ENCODE measurements at regions of chr20 and their contacts with region 1.

Region 1: DNA sequence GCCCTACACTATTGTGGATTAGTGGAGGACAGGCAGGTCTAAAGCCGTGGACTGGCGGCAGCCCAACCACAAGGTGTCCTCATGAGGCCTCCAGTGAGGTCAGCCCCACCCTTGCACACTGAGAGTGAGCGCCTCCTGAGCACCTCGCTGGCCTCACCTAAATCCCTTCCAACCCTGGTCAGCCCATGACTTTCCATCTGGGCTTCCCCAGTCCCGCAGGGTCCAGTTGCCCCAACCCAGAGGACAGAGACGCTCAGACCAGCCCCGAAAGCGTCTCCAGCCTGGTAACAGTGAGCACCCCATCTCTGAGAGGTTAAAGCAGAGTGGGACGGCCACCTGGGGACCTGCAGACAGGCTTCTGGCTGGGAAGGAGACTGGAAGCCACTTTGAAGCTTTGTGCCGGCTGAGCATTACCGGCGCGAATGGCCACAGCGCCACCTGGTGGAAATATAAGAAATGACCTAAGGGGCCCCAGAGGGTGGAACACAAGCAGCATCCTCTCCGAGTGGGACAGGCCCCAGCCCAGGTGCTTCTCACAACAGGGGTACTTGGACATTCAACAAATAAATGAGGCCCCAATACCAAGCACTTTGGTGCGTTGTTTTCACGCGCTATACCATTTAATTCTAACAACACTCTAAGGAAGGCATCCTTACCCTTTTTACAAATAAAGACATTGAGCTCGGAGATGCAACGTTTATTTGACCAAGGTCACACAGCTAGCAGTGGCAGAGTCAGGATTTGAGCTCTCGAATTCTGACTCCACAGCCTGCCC is 65.7 kb upstream of the TOP1 start:
- DNase-seq: peak; percentile 56
- H3K4me3 ChIP-seq: no peak overlapping the region
- H3K27ac ChIP-seq: no peak overlapping the region
- H3K4me1 ChIP-seq: peaks cover 26% of the 10 kb centered on the region
- H3K27me3 ChIP-seq: no peaks in the 10 kb centered on the region
- CTCF ChIP-seq: peak; percentile 69 to 89

Region 2: DNA sequence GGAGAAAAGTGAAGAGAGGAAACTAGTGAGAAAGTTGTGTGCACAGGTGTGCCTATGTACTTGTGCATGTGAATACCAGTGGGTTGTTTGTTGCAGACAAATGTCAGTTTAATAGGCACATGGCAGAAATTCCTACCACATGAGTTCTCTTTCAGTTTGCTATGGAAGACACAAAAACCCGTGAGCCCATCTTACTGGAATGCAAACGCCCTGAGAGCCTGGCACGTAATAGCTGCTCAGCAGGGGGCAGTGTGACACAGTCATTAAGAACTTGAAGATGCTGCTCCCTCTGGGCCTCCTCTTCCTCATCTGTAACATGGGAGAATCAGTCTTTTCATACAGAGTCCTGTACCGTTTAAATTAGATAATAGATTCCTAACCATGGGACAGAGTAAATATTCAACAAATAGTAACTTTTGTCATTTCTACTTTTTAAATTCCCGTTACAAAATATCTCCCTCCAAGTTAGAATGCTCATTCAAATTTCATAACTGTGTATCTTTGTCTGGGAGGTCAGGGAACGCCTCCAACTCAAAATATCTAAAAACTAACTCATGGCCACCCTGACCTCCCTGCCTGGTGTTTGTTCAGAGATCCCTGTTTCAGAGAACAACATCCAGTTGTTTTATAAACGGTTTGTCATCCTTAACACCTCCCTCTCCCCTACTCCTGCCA is 1076.8 kb before region 1 on chr20:
- CTCF ChIA-PET with region 1: no interaction called
- dilution Hi-C with region 1: no loop called
- in situ Hi-C with region 1: no loop called
- intact Hi-C with region 1: loop called (anchors 1 kb)
- DNase-seq: peak; percentile 61
- H3K4me3 ChIP-seq: no peak overlapping the region
- H3K27ac ChIP-seq: no peak overlapping the region
- H3K4me1 ChIP-seq: no peaks in the 10 kb centered on the region
- H3K27me3 ChIP-seq: no peaks in the 10 kb centered on the region
- CTCF ChIP-seq: peak; percentile 58 to 59

Region 3: GRCh38 chr20:40265825-40266533 is 696.9 kb before region 1 on chr20:
- CTCF ChIA-PET with region 1: no interaction called
- dilution Hi-C with region 1: no loop called
- in situ Hi-C with region 1: no loop called
- intact Hi-C with region 1: loop called (anchors 1 kb)
- DNase-seq: peak; percentile 36
- H3K4me3 ChIP-seq: no peak overlapping the region
- H3K27ac ChIP-seq: no peak overlapping the region
- H3K4me1 ChIP-seq: no peaks in the 10 kb centered on the region
- H3K27me3 ChIP-seq: no peaks in the 10 kb centered on the region
- CTCF ChIP-seq: peak; percentile 57 to 76

Region 4: GRCh38 chr20:40741507-40742106 is 221.3 kb before region 1 on chr20:
- CTCF ChIA-PET with region 1: interaction called, 6 read pairs
- dilution Hi-C with region 1: no loop called
- in situ Hi-C with region 1: no loop called
- intact Hi-C with region 1: loop called (anchors 1 kb)
- DNase-seq: peak; percentile 37
- H3K4me3 ChIP-seq: no peak overlapping the region
- H3K27ac ChIP-seq: no peak overlapping the region
- H3K4me1 ChIP-seq: no peaks in the 10 kb centered on the region
- H3K27me3 ChIP-seq: peaks cover 1% of the 10 kb centered on the region
- CTCF ChIP-seq: peak; percentile 80 to 92

Region 5: DNA sequence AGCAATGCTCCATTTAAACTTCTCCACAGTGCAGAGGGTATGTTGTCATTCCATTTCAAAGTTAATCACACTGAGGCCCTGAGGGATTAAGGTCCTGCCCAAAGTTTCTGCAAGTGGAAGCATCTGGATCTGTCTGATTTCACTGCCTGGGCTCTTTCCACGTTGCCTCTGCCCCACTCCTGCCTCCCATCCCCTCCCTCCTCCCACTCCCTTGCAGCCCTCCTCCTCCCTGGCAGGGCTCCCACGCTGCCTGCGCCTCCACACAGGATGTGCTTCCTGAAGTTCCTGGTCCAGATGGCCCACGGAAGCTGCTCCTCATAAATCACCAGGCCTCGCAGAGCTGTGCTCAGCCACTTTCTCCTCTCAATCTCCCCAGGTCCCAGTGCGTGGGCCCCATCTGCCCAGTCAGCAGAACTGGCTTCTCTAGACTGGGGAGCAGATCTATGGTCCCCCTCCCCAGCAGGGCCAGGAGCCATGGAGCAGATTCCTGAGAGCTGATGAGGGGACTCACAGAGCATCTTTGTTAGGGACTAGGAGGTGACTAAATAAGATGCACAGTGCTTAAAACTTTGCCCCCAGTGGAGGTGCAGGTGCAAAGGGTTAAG is 208.5 kb before region 1 on chr20:
- CTCF ChIA-PET with region 1: no interaction called
- dilution Hi-C with region 1: no loop called
- in situ Hi-C with region 1: no loop called
- intact Hi-C with region 1: no loop called
- DNase-seq: no peak
- H3K4me3 ChIP-seq: no peak overlapping the region
- H3K27ac ChIP-seq: no peak overlapping the region
- H3K4me1 ChIP-seq: peaks cover 7% of the 10 kb centered on the region
- H3K27me3 ChIP-seq: no peaks in the 10 kb centered on the region
- CTCF ChIP-seq: no peak

Region 6: DNA sequence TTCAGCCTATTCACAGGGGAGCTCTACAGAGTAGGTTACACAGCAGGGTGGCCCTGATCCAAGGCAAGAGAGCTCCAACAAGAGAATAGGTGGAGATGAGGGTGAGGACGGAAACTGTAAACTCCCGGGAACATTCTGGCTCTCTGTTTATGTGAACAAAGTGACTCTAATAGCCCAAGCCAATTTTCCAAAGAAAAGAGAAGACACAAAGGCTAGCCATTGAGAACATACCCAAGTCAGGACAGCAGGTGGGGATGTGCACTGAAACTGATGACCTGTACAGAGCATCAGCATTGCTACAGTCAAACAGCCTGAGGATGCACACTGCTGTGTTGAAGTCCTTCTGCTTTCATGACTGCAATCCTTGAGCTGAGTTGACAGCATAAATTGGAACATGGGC is 70.3 kb before region 1 on chr20:
- CTCF ChIA-PET with region 1: no interaction called
- dilution Hi-C with region 1: no loop called
- in situ Hi-C with region 1: no loop called
- intact Hi-C with region 1: loop called (anchors 1 kb)
- DNase-seq: no peak
- H3K4me3 ChIP-seq: no peak overlapping the region
- H3K27ac ChIP-seq: no peak overlapping the region
- H3K4me1 ChIP-seq: no peaks in the 10 kb centered on the region
- H3K27me3 ChIP-seq: no peaks in the 10 kb centered on the region
- CTCF ChIP-seq: peak in 1 of 2 donors; percentile 5

Region 7: DNA sequence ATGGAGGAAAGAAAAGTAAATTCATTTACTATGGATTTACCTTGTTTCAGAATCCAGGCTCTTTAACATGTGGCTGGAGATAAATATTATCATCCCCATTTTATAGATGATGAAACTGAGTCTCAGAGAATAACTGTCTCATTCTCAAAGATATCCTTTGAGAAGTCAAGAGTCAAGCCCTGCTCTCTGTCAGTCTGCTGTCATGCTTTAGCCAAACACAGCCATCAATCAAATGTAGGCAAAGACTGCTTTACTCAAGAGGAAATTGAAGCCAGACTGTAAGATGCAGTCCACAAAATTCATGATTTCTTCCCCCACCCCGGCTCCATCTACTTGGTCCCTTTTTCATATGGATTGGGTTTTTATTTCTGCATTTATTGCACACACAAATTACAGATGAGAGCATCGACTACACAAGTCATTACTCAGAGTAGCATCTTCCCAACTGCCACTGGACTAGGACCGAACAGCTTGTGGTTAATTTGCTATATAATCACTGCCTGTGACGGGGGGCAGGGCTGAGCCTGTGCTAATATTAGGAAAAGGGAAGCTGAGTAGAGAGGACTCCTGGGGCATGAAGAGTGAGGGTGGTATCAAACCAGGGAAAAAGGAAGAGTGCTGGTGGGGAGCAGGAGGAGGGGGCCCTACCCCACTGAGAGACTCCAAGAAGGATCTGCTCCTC is 36.9 kb before region 1 on chr20:
- CTCF ChIA-PET with region 1: no interaction called
- dilution Hi-C with region 1: no loop called
- in situ Hi-C with region 1: no loop called
- intact Hi-C with region 1: no loop called
- DNase-seq: no peak
- H3K4me3 ChIP-seq: no peak overlapping the region
- H3K27ac ChIP-seq: no peak overlapping the region
- H3K4me1 ChIP-seq: no peaks in the 10 kb centered on the region
- H3K27me3 ChIP-seq: no peaks in the 10 kb centered on the region
- CTCF ChIP-seq: no peak

Region 8: DNA sequence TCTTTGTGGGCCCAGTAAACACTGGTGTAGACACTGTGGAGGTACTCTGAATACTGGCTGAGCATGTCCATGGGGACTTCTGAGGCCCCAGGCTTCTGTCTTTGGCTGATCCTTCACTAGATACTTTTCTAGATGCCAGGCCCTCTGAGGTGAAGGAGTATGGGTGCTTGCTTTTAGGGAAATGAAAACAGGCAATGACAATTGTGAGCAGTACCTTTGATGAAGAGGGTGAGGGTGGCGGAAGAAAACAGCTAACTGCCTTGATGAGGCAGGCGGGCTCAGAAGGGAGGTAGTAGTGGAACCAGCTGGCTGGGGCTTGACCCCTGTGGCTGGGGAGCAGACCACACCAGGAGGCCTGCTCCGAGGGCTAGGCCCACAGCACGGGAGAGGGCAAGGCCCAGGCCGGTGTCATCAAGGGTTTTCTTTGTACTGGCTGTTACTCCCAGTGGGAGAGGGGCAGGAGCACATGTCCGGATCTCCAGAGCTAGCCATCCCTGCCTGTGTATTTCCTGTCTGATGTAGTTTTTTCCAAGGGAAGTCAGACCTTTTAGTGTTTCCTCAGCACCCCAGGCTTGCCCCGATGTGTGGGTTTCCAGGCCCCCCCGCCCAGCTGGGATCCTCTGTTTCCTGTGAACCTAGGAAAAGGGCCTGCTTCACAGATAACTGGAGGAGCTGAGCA is 178.4 kb after region 1 on chr20:
- CTCF ChIA-PET with region 1: no interaction called
- dilution Hi-C with region 1: no loop called
- in situ Hi-C with region 1: no loop called
- intact Hi-C with region 1: no loop called
- DNase-seq: no peak
- H3K4me3 ChIP-seq: no peak overlapping the region
- H3K27ac ChIP-seq: no peak overlapping the region
- H3K4me1 ChIP-seq: peaks cover 29% of the 10 kb centered on the region
- H3K27me3 ChIP-seq: no peaks in the 10 kb centered on the region
- CTCF ChIP-seq: no peak

Region 9: DNA sequence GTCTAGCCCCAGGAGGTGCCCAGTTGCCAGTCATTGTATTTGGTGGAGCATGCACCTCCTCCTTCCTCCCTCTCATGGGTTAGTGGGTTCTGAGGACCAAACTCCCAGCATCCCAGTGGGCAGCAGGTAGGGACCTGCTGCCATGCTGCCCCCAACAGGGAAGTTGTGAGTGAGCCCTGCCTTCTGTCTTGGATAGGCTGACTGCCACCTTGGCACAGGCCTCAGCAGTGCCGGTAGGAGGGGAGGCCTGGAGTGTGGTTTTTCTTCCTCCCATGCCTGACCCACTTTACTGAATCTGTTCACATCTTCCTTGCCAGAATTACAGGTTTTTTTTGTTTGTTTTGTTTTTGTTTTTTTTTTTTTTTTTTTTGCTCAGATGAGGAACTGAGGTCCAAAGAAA is 199.0 kb after region 1 on chr20:
- CTCF ChIA-PET with region 1: interaction called, 12 read pairs
- dilution Hi-C with region 1: no loop called
- in situ Hi-C with region 1: no loop called
- intact Hi-C with region 1: no loop called
- DNase-seq: no peak
- H3K4me3 ChIP-seq: no peak overlapping the region
- H3K27ac ChIP-seq: no peak overlapping the region
- H3K4me1 ChIP-seq: peaks cover 20% of the 10 kb centered on the region
- H3K27me3 ChIP-seq: no peaks in the 10 kb centered on the region
- CTCF ChIP-seq: no peak

Region 10: DNA sequence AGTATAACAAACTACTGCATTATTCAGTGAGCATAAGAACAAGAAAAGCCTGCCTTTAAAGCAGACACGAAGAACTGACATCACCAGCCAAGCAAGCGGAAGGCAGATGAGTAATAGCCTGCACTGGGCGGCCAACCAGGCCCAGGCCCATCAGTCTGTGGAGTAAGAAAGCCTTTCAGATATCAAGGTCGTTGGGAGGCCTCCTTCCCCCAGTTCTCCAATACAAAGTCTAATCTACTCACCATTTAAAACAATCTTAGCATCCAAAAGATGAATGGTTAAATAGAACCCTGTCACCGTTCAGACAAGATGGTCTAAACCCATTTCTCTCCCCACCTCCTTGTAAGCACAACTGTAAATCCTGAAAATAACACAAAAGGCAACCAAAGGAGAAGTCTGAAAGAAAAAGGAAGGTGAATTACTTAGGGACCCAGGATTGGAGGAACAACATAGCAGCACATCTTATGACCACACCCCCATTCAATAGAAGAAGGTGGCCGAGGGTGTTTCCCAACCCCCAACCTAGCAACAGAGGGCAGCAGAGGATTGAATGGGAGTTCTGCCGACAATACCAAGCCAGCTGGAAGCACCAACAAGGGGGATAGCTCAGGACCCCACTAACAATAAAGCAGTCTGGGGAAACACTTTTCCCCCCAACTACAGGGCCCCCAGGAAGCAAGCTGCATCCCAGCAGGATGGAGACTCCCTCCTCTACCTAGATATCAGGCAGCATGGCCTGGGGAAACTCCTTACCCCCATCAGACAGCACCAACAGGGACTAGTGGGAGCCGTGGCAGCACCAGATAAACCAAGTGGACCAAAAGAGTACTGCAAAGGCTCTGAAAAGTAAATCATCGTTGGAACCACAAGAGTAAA is 286.7 kb after region 1 on chr20:
- CTCF ChIA-PET with region 1: no interaction called
- dilution Hi-C with region 1: no loop called
- in situ Hi-C with region 1: no loop called
- intact Hi-C with region 1: no loop called
- DNase-seq: peak; percentile 78
- H3K4me3 ChIP-seq: no peak overlapping the region
- H3K27ac ChIP-seq: peak overlapping the region; percentile 69
- H3K4me1 ChIP-seq: peaks cover 22% of the 10 kb centered on the region
- H3K27me3 ChIP-seq: no peaks in the 10 kb centered on the region
- CTCF ChIP-seq: peak in 1 of 2 donors; percentile 1

Region 11: GRCh38 chr20:41738604-41739206 is 775.8 kb after region 1 on chr20:
- CTCF ChIA-PET with region 1: no interaction called
- dilution Hi-C with region 1: no loop called
- in situ Hi-C with region 1: no loop called
- intact Hi-C with region 1: loop called (anchors 10 kb)
- DNase-seq: peak; percentile 11
- H3K4me3 ChIP-seq: no peak overlapping the region
- H3K27ac ChIP-seq: no peak overlapping the region
- H3K4me1 ChIP-seq: no peaks in the 10 kb centered on the region
- H3K27me3 ChIP-seq: no peaks in the 10 kb centered on the region
- CTCF ChIP-seq: peak; percentile 80 to 93